Posterior vena cava (tissue), 2 donors: ENCODE measurements at regions of chr15 and their contacts with region 1.

Region 1: DNA sequence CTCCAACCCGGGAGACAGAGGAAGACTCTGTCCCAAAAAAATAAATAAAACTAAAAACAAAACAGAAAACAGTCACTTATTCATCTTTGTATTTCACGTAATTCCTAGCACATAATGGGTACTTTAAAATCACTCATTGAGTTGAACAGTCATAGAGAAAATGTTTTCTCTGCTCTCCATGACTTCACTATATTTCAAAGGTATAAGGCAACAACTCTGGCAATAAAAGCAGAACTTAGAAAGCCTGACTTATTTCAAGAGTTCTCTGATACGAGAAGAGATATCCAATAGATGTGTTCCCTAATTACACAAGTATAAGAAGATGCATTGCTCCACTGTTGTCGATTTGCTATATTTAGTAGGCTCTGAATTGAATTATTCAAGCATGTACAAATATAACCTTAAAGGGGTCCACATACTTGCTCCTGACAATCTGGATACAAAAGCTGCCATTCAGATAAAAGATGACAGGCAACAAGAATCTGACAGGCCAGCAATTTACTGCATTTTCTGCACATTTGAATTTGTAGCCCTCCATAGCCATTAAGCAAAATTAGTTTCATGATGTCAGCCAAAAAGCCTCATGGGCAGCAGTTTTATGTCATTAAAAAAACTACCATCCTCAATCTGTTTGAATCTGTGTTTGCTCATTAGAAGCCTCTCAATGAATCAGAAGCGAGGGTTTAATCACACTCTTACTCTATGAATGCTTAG is 47.9 kb downstream of the PEAK1 start:
- DNase-seq: no peak

Region 2: DNA sequence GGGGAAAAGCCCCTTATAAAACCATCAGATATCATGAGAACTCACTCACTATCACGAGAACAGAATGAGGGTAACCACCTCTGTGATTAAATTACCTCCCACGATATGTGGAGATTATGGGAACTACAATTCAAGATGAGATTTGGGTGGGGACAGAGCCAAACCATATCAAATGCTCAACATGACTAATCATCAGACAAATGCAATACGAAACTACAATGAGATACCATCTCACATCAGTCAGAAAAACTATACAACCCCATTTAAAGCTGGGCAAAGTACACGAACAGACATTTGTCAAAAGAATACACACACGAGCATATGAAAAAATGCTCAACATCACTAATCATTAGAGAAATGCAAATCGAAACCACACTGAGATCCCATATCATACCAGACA is 534.5 kb before region 1 on chr15:
- intact Hi-C with region 1: loop called in 1 of 2 experiments (anchors 5 kb)
- DNase-seq: no peak

Region 3: DNA sequence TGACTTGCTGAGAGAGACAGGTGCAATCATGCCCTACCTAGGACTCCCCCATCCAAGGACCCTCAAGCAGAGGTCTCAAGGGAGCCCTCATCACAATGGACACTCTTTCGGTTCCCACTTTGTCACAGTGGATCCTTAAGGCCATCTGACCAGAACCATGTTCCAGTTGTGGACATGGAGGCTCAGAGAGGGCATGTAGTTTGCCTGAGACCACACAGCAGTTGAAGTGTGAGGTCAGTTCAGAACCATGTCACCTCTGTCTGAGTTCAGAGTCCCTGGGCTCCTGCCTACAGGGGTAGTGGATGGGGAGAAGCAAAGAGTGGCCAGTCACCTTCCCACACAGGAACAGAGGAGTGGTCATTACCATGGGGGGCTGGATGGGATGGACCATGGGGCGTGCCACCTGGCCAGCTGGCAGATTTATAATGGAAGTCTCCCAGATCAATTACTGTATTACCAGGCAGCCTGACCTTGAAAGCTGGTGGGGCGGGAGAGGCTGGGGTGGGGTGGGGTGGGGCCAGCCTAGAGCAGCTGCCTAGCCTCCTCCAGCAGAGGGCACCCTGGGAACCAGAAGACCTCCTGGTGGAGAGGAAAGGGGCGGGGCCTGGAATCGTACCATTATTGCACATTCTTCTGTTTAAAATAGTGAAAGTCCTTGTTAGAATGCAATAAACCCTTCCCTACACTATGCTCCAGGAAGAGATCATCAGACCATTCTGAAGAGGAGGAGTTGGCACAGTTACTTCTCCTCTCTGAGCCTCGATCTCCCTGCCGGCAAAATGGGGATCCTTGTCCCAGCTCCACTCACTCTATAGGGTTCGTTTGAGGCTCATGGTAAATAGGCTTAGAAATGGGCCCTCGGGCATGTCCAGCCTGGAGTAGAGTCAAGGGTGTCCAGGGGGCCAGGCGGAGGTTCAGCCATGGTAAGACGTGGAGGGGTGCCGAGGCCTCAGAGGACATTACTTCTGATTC is 287.6 kb after region 1 on chr15:
- intact Hi-C with region 1: no loop called
- DNase-seq: no peak